Naive thymus-derived CD4-positive, alpha-beta T cell (primary cell): ENCODE measurements at regions of chr6 and their contacts with region 1.

Region 1: GRCh38 chr6:152552616-152553209 is 84.4 kb downstream of the SYNE1 start:
- DNase-seq: peak in 2 of 9 donors; percentile 5 to 22
- ATAC-seq: peak; percentile 80
- H3K4me3 ChIP-seq: no peak overlapping the region
- H3K4me3 Mint-ChIP-seq: no peak overlapping the region
- H3K27ac ChIP-seq: no peak overlapping the region
- H3K27ac Mint-ChIP-seq: no peak overlapping the region
- H3K4me1 ChIP-seq: no peaks in the 10 kb centered on the region
- H3K4me1 Mint-ChIP-seq: no peaks in the 10 kb centered on the region
- H3K27me3 ChIP-seq: no peaks in the 10 kb centered on the region
- H3K27me3 Mint-ChIP-seq: peaks cover 0 to 17% (median 4%) of the 10 kb centered on the region in 5 donors

Region 2: GRCh38 chr6:152039217-152039616 is 513.5 kb before region 1 on chr6:
- CTCF ChIA-PET with region 1: no interaction called
- POLR2A ChIA-PET with region 1: no interaction called
- intact Hi-C with region 1: no loop called
- DNase-seq: no peak
- ATAC-seq: no peak
- H3K4me3 ChIP-seq: no peak overlapping the region
- H3K4me3 Mint-ChIP-seq: no peak overlapping the region
- H3K27ac ChIP-seq: no peak overlapping the region
- H3K27ac Mint-ChIP-seq: no peak overlapping the region
- H3K4me1 ChIP-seq: no peaks in the 10 kb centered on the region
- H3K4me1 Mint-ChIP-seq: no peaks in the 10 kb centered on the region
- H3K27me3 ChIP-seq: no peaks in the 10 kb centered on the region
- H3K27me3 Mint-ChIP-seq: no peaks in the 10 kb centered on the region

Region 3: DNA sequence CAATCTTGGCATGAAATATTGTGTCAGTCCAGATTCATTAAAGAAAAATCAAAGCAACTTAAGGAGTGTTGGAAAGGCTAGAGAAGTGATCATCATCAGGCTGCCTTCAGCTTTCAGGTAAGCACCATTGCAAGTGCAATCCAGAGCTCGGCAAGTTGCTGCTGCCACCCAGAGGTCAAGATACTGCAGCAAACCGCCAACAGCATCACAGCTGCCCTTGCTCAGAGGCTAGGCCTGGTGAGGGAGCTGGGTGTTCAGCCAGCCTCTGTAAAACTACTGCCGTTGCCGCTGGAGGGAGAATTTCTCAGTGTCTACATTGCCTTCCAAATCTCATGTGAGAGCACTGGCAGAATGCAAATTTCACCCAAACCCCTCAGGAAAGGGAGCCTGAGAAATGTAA is 90.3 kb after region 1 on chr6:
- CTCF ChIA-PET with region 1: no interaction called
- POLR2A ChIA-PET with region 1: no interaction called
- intact Hi-C with region 1: loop called in 1 of 2 experiments (anchors 5 kb)
- DNase-seq: peak in 1 of 9 donors; percentile 1
- ATAC-seq: peak; percentile 84
- H3K4me3 ChIP-seq: no peak overlapping the region
- H3K4me3 Mint-ChIP-seq: no peak overlapping the region
- H3K27ac ChIP-seq: no peak overlapping the region
- H3K27ac Mint-ChIP-seq: no peak overlapping the region
- H3K4me1 ChIP-seq: no peaks in the 10 kb centered on the region
- H3K4me1 Mint-ChIP-seq: peaks cover 0 to 2% (median under 1%) of the 10 kb centered on the region in 7 donors
- H3K27me3 ChIP-seq: no peaks in the 10 kb centered on the region
- H3K27me3 Mint-ChIP-seq: peaks cover 13 to 35% (median 20%) of the 10 kb centered on the region in 5 donors

Region 4: DNA sequence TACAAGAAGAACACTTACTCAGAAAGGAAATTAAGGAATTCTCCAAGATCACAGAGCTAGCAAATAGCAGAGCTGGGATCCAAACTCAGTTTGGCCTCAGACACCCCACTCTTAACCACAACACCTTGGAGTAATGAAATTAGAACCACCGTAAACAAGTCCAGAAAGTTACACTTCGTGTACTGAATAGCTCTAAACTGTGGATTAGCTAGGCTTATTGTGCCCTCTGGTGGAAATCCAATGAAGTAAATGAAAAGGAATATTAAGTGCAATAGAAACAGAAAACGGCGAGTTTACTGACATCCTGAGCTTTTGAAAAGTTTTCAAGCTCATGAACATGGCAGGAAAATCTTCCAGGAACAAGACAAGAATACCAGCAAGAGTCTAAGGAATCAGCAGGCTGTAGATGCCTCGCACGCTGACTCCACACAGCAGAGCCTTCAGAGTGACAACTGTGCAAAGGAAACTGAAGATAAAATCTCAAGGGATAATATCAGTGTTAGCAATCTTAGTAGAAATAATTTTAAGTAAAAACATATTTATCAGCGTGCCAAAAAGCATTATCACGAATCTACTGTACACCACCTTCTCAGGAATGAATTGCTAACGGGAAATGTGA is 395.5 kb after region 1 on chr6:
- CTCF ChIA-PET with region 1: no interaction called
- POLR2A ChIA-PET with region 1: no interaction called
- intact Hi-C with region 1: loop called in 1 of 2 experiments (anchors 2 kb)
- DNase-seq: peak in 5 of 9 donors; percentile 9 to 35 (median 26)
- ATAC-seq: peak; percentile 72
- H3K4me3 ChIP-seq: no peak overlapping the region
- H3K4me3 Mint-ChIP-seq: peak overlapping the region in 7 of 10 donors; percentile 3 to 56 (median 41)
- H3K27ac ChIP-seq: no peak overlapping the region
- H3K27ac Mint-ChIP-seq: no peak overlapping the region
- H3K4me1 ChIP-seq: no peaks in the 10 kb centered on the region
- H3K4me1 Mint-ChIP-seq: peaks cover 0 to 11% (median 9%) of the 10 kb centered on the region in 7 donors
- H3K27me3 ChIP-seq: peaks cover 0 to 7% of the 10 kb centered on the region in 2 donors
- H3K27me3 Mint-ChIP-seq: peaks cover 17 to 44% (median 25%) of the 10 kb centered on the region in 5 donors